ENCODE measurements at regions of chr19 and their contacts with region 1.

Region 1: DNA sequence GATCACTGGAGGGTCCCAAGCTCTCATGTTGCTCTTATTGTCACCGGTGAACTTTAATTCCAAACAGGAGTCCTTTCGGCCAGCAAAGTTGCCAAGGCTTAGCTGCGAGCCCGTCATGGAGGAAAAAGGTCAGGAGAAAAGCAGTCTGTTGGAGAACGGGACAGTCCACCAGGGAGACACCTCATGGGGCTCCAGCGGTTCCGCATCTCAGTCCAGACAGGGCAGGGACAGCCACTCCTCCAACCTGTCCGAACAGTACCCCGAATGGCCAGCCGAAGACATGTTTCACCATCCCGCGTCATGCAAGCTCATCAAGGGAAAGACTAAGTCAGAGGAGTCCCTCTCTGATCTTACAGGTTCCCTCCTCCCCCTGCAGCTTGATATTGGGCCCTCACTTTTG is 10.4 kb downstream of the ZNF91 start:
- DNase-seq: no peak
- ATAC-seq: no peak
- H3K4me3 Mint-ChIP-seq: peak overlapping the region in 2 of 10 donors; percentile 24 to 30
- H3K27ac Mint-ChIP-seq: peak overlapping the region in 1 of 10 donors; percentile 44
- H3K4me1 Mint-ChIP-seq: peaks cover 2 to 42% (median 24%) of the 10 kb centered on the region in 4 donors
- H3K27me3 Mint-ChIP-seq: no peaks in the 10 kb centered on the region

Region 2: DNA sequence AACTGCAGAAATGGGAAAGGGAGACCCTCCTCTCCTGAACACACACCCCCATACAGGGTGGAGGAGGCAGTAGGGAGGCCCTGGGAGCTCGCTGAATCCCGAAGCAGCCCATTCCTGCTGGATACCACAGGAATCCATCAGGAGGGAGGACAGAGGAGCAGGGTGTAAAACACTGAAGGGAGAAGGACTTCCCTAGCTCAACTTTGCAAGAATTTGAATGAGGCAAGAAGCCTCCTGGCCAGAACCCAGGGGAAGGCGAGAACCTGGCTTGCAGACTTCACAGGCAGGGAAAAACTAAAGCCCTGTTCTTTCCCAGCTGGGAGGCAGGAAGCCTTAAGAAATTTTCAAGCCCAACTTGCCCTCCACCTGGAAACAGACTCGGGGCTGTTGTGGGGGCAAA is 33.1 kb before region 1 on chr19:
- POLR2A ChIA-PET with region 1: no interaction called
- DNase-seq: no peak
- ATAC-seq: no peak
- H3K4me3 Mint-ChIP-seq: no peak overlapping the region
- H3K27ac Mint-ChIP-seq: no peak overlapping the region
- H3K4me1 Mint-ChIP-seq: peaks cover 3 to 8% (median 5%) of the 10 kb centered on the region in 4 donors
- H3K27me3 Mint-ChIP-seq: no peaks in the 10 kb centered on the region

Region 3: GRCh38 chr19:23395041-23395721 is 10.3 kb after region 1 on chr19 and contains the start of gene ZNF91:
- POLR2A ChIA-PET with region 1: interaction called, 15 read pairs
- DNase-seq: peak; percentile 77 to 97 (median 92)
- ATAC-seq: peak; percentile 94 to 95
- H3K4me3 Mint-ChIP-seq: peak within 1 kb of the TSS; percentile 93 to 99 (median 96)
- H3K27ac Mint-ChIP-seq: peak within 1 kb of the TSS; percentile 94 to 99 (median 99)
- H3K4me1 Mint-ChIP-seq: peaks cover 11 to 44% (median 36%) of the 10 kb centered on the region in 4 donors
- H3K27me3 Mint-ChIP-seq: no peaks in the 10 kb centered on the region
- polyA plus RNA-seq, gene ZNF91: 44.2 to 53.8 (median 51.7) TPM

Region 4: DNA sequence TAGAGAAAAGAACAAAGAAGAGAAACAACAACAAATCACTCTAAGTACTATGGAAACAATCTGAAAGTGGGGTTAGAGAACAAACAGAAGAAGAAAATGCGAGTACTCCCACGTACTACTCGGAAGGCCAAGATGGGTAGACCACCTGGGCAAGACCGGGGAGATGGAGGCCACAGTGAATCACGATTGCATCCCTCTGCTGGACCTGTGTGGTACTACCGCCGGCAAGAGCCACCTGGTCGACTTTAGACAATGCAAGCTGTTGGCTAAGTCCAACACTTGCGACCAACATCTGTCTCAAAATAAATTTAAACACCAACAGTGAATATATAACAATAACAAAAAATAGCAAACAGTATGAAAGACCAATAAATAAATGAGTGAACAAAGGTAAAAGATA is 55.9 kb after region 1 on chr19:
- POLR2A ChIA-PET with region 1: no interaction called
- DNase-seq: no peak
- ATAC-seq: no peak
- H3K4me3 Mint-ChIP-seq: no peak overlapping the region
- H3K27ac Mint-ChIP-seq: no peak overlapping the region
- H3K4me1 Mint-ChIP-seq: no peaks in the 10 kb centered on the region
- H3K27me3 Mint-ChIP-seq: peaks cover 0 to 3% (median 0%) of the 10 kb centered on the region in 5 donors